GM10248 (cell line): ENCODE measurements at regions of chr20 and their contacts with region 1.

Region 1: GRCh38 chr20:50110141-50110925 is 2.6 kb downstream of the UBE2V1 start:
- DNase-seq: peak; percentile 51
- CTCF ChIP-seq: no peak

Region 2: DNA sequence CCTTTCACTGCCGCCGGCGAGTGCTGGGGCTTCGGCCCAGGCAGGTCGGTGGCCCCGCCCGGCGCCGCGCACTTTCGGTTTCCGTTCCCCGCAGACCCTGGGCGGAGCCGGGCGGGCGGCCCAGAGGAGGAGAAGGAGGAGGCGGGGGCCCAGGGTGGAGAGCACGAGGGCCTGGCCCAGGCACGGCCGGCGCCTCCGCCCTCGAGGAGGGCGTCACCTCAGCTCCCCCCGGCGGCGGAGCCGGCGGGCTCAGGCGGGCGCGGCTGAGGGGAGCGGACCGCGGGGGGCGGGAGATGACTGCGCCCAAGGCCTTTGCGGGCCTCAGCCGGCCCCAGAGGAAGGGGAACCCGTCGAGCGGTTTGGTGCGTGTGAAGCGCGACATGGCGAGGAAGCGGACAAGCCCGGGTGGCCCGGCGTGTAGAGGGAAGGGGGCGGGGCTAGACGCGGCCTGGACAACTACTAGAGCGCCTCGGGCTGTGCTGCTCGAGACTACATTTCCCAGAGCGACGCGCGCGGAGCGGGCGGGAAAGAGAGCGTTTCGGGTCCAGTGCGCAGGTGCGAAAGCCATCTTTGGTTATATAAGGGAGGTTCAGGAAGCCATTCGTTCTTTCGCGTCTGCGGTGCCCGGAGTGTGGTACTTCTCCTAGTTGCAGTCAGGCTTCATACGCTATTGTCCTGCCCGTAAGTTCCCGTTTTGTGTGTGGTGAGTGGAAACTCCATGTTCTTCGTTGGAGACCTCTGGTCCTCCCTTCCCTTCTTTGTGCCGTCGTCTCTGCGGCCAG is 832.1 kb before region 1 on chr20 and contains the start of gene ZNFX1:
- CTCF ChIA-PET with region 1: no interaction called
- POLR2A ChIA-PET with region 1: interaction called, 10 read pairs
- DNase-seq: peak; percentile 95
- CTCF ChIP-seq: peak; percentile 18

Region 3: GRCh38 chr20:50085452-50086365 is 24.6 kb before region 1 on chr20:
- CTCF ChIA-PET with region 1: interaction called, 16 read pairs
- POLR2A ChIA-PET with region 1: no interaction called
- DNase-seq: peak; percentile 72
- CTCF ChIP-seq: peak; percentile 77